ENCODE measurements at regions of chr15 and their contacts with region 1.

Region 1: GRCh38 chr15:40470423-40471104 is at the start of gene CHST14:
- DNase-seq: peak; percentile 37 to 48
- ATAC-seq: peak; percentile 81 to 86
- H3K4me3 ChIP-seq: peak within 1 kb of the TSS; percentile 96
- H3K27ac ChIP-seq: peak within 1 kb of the TSS; percentile 98
- H3K4me1 ChIP-seq: peaks cover 12% of the 10 kb centered on the region
- CTCF ChIP-seq: no peak
- EP300 ChIP-seq: no peak
- POLR2A ChIP-seq: peak; percentile 42
- RAD21 ChIP-seq: no peak
- polyA plus RNA-seq, gene CHST14: 8.6 and 9.8 TPM in 2 replicates

Region 2: DNA sequence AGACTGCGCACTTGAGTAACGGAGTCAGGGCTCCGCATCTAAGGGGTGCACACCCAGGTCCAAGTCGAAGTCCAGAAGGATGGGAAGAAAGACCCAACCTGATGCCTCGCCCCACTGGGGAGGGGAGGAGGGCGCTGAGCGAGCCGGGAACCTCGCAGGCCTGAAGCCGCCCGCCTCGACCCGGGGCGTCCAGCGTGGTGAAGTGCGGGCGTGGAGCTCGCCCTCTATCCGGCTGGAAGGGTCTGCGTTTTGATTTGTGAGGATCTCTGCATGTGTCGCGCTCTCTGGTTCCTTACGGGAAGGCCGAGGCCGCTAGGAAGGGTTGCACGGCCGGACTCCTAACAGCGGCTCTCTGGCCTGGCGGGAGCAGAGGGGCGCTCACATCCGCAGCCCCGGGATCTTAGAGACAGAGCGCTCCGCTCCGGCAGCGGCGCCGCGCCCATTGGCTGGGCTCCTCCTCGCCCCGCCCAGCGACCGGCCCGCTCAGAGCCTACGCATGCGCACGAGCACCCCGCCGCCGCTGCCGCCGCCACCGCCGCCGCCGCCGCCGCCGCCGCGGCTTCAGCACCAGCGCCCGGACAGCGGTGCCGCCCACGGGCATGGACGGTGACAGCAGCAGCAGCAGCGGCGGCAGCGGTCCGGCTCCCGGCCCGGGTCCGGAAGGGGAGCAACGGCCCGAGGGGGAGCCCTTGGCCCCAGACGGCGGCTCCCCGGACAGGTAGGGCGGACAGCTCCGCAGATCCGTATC is 112.7 kb before region 1 on chr15 and contains the start of gene DISP2:
- CTCF ChIA-PET with region 1: no interaction called
- POLR2A ChIA-PET with region 1: no interaction called
- DNase-seq: peak; percentile 69 to 83
- ATAC-seq: peak; percentile 79 to 89
- H3K4me3 ChIP-seq: peak within 1 kb of the TSS; percentile 57
- H3K27ac ChIP-seq: peak within 1 kb of the TSS in 1 of 2 experiments; percentile 77; a peak in 2 of 6 replicates
- H3K4me1 ChIP-seq: peaks cover 6% of the 10 kb centered on the region; the same call in 1 of the 3 replicates
- CTCF ChIP-seq: no peak
- EP300 ChIP-seq: no peak
- POLR2A ChIP-seq: no peak
- RAD21 ChIP-seq: no peak
- polyA plus RNA-seq, gene DISP2: 0.26 and 0.52 TPM in 2 replicates

Region 3: DNA sequence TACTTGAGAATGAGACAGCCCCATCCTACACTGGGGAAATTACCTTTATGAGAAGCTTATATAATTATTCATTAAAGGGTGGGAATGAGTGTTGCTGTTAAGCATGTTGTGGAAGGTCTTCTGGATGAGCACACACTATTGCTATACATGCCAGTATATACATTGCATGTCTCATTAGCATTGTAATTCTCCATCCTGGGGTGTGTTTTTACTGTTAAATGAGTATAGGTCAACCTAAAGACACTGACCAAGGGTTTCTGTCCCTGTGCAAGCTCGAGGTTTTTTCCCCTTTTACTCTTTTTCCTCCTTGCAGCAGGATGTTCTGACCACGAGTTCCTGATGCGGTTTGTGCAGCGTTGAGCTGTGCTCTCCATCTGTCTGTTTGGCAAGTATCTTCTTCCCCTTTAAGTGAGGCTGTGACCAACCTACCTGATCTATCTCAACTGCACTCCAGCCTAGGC is 72.1 kb before region 1 on chr15:
- CTCF ChIA-PET with region 1: no interaction called
- POLR2A ChIA-PET with region 1: interaction called, 16 read pairs
- DNase-seq: no peak
- ATAC-seq: no peak
- H3K4me3 ChIP-seq: no peak overlapping the region
- H3K27ac ChIP-seq: no peak overlapping the region
- H3K4me1 ChIP-seq: no peaks in the 10 kb centered on the region
- CTCF ChIP-seq: no peak
- EP300 ChIP-seq: no peak
- POLR2A ChIP-seq: no peak
- RAD21 ChIP-seq: no peak

Region 4: GRCh38 chr15:40941528-40942336 is 471.2 kb after region 1 on chr15:
- CTCF ChIA-PET with region 1: no interaction called
- POLR2A ChIA-PET with region 1: no interaction called
- DNase-seq: peak; percentile 58 to 63
- ATAC-seq: peak; percentile 76 to 81
- H3K4me3 ChIP-seq: peak overlapping the region; percentile 61
- H3K27ac ChIP-seq: peak overlapping the region; percentile 89 to 94
- H3K4me1 ChIP-seq: peaks cover 18% of the 10 kb centered on the region
- CTCF ChIP-seq: peak; percentile 89
- EP300 ChIP-seq: no peak
- POLR2A ChIP-seq: no peak; the same call in 1 of the 2 replicates
- RAD21 ChIP-seq: peak; percentile 32 to 66; a peak in 4 of 5 replicates

Measured in A549 (cell line).